ENCODE measurements at regions of chr1 and their contacts with region 1.

Region 1: GRCh38 chr1:20493839-20494608 is 8.0 kb upstream of the CAMK2N1 start:
- DNase-seq: peak; percentile 88
- ATAC-seq: peak; percentile 68
- H3K4me3 ChIP-seq: no peak overlapping the region
- H3K27ac ChIP-seq: peak overlapping the region; percentile 38
- H3K4me1 ChIP-seq: peaks cover 19% of the 10 kb centered on the region
- H3K27me3 ChIP-seq: no peaks in the 10 kb centered on the region
- CTCF ChIP-seq: peak; percentile 99
- POLR2A ChIP-seq: peak; percentile 59; the same call in 1 of the 2 replicates
- RAD21 ChIP-seq: peak; percentile 99

Region 2: DNA sequence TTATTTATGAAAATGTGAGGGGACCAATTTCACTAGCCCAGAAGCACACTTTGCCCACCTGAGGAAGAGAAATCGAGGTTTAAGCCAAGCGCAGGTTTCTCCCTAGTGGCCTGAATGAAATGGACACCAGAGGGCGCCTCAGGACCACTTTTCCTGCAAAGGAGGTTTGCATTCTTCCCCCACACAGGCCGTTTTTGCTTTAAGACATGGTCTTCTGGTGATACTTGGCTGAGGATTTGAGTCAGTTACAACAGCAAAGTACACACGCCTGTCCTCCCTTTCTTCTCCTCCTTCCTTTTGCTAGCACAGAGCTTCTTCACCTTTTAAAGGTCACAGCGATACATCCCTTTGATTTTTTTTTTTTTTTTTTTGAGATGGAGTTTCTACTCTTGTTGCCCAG is 576.0 kb before region 1 on chr1:
- CTCF ChIA-PET with region 1: no interaction called
- POLR2A ChIA-PET with region 1: no interaction called
- dilution Hi-C with region 1: no loop called
- in situ Hi-C with region 1: loop called (anchors 10 kb)
- intact Hi-C with region 1: loop called (anchors 1 kb)
- DNase-seq: peak; percentile 79
- ATAC-seq: peak; percentile 89
- H3K4me3 ChIP-seq: no peak overlapping the region
- H3K27ac ChIP-seq: no peak overlapping the region
- H3K4me1 ChIP-seq: no peaks in the 10 kb centered on the region
- H3K27me3 ChIP-seq: no peaks in the 10 kb centered on the region; the same call in 1 of the 2 replicates
- CTCF ChIP-seq: peak; percentile 94
- POLR2A ChIP-seq: no peak
- RAD21 ChIP-seq: peak; percentile 95

Region 3: GRCh38 chr1:20100632-20101355 is 393.2 kb before region 1 on chr1:
- CTCF ChIA-PET with region 1: no interaction called
- POLR2A ChIA-PET with region 1: no interaction called
- dilution Hi-C with region 1: no loop called
- in situ Hi-C with region 1: no loop called
- intact Hi-C with region 1: loop called (anchors 1 kb)
- DNase-seq: peak; percentile 48
- ATAC-seq: peak; percentile 95
- H3K4me3 ChIP-seq: no peak overlapping the region
- H3K27ac ChIP-seq: no peak overlapping the region
- H3K4me1 ChIP-seq: peaks cover 3% of the 10 kb centered on the region
- H3K27me3 ChIP-seq: peaks cover 22% of the 10 kb centered on the region
- CTCF ChIP-seq: peak; percentile 54
- POLR2A ChIP-seq: no peak
- RAD21 ChIP-seq: peak; percentile 59

Region 4: GRCh38 chr1:20212685-20213331 is 281.2 kb before region 1 on chr1:
- CTCF ChIA-PET with region 1: interaction called, 7 read pairs
- POLR2A ChIA-PET with region 1: no interaction called
- dilution Hi-C with region 1: no loop called
- in situ Hi-C with region 1: loop called (anchors 5 kb)
- intact Hi-C with region 1: loop called (anchors 1 kb)
- DNase-seq: peak; percentile 38
- ATAC-seq: peak; percentile 94
- H3K4me3 ChIP-seq: no peak overlapping the region
- H3K27ac ChIP-seq: no peak overlapping the region
- H3K4me1 ChIP-seq: no peaks in the 10 kb centered on the region
- H3K27me3 ChIP-seq: peaks cover 24% of the 10 kb centered on the region
- CTCF ChIP-seq: peak; percentile 78
- POLR2A ChIP-seq: no peak
- RAD21 ChIP-seq: peak; percentile 77

Region 5: GRCh38 chr1:20361806-20362640 is 132.0 kb before region 1 on chr1:
- CTCF ChIA-PET with region 1: interaction called, 14 read pairs
- POLR2A ChIA-PET with region 1: no interaction called
- dilution Hi-C with region 1: no loop called
- in situ Hi-C with region 1: no loop called
- intact Hi-C with region 1: loop called (anchors 1 kb)
- DNase-seq: peak; percentile 37
- ATAC-seq: peak; percentile 62
- H3K4me3 ChIP-seq: no peak overlapping the region
- H3K27ac ChIP-seq: no peak overlapping the region
- H3K4me1 ChIP-seq: peaks cover 11% of the 10 kb centered on the region; the same call in 1 of the 2 replicates
- H3K27me3 ChIP-seq: peaks cover 44% of the 10 kb centered on the region
- CTCF ChIP-seq: peak; percentile 81
- POLR2A ChIP-seq: no peak
- RAD21 ChIP-seq: peak; percentile 86

Region 6: GRCh38 chr1:20440785-20441200 is 53.2 kb before region 1 on chr1:
- CTCF ChIA-PET with region 1: no interaction called
- POLR2A ChIA-PET with region 1: no interaction called
- dilution Hi-C with region 1: no loop called
- in situ Hi-C with region 1: no loop called
- intact Hi-C with region 1: no loop called
- DNase-seq: peak; percentile 47
- ATAC-seq: peak; percentile 85
- H3K4me3 ChIP-seq: no peak overlapping the region
- H3K27ac ChIP-seq: no peak overlapping the region
- H3K4me1 ChIP-seq: no peaks in the 10 kb centered on the region
- H3K27me3 ChIP-seq: peaks cover 13% of the 10 kb centered on the region
- CTCF ChIP-seq: no peak
- POLR2A ChIP-seq: no peak
- RAD21 ChIP-seq: no peak

Region 7: GRCh38 chr1:20632381-20632780 is 138.4 kb after region 1 on chr1:
- CTCF ChIA-PET with region 1: no interaction called
- POLR2A ChIA-PET with region 1: no interaction called
- dilution Hi-C with region 1: no loop called
- in situ Hi-C with region 1: no loop called
- intact Hi-C with region 1: no loop called
- DNase-seq: no peak
- ATAC-seq: no peak
- H3K4me3 ChIP-seq: no peak overlapping the region
- H3K27ac ChIP-seq: no peak overlapping the region
- H3K4me1 ChIP-seq: no peaks in the 10 kb centered on the region
- H3K27me3 ChIP-seq: 0 out of 2 replicates have a peak, but pooled peaks cover 4% of the 10 kb centered on the region
- CTCF ChIP-seq: no peak
- POLR2A ChIP-seq: no peak
- RAD21 ChIP-seq: no peak